ENCODE measurements at regions of chr19 and their contacts with region 1.

Region 1: GRCh38 chr19:46076951-46077816 is 36.4 kb upstream of the IGFL4 start:
- DNase-seq: peak; percentile 90 to 95
- ATAC-seq: peak; percentile 94 to 95
- H3K4me3 ChIP-seq: peak overlapping the region; percentile 59
- H3K27ac ChIP-seq: peak overlapping the region; percentile 72 to 86
- H3K4me1 ChIP-seq: peaks cover 45% of the 10 kb centered on the region
- CTCF ChIP-seq: peak; percentile 100
- EP300 ChIP-seq: no peak
- POLR2A ChIP-seq: no peak
- RAD21 ChIP-seq: peak; percentile 99 to 100

Region 2: GRCh38 chr19:45817010-45817724 is 260.0 kb before region 1 on chr19:
- CTCF ChIA-PET with region 1: interaction called, 13 read pairs
- POLR2A ChIA-PET with region 1: no interaction called
- DNase-seq: peak; percentile 96 to 100
- ATAC-seq: peak; percentile 63 to 93
- H3K4me3 ChIP-seq: no peak overlapping the region
- H3K27ac ChIP-seq: peak overlapping the region in 1 of 2 experiments; percentile 61; a peak in 3 of 6 replicates
- H3K4me1 ChIP-seq: peaks cover 10% of the 10 kb centered on the region; the same call in 1 of the 3 replicates
- CTCF ChIP-seq: peak; percentile 100
- EP300 ChIP-seq: no peak
- POLR2A ChIP-seq: no peak
- RAD21 ChIP-seq: peak; percentile 80 to 85

Region 3: DNA sequence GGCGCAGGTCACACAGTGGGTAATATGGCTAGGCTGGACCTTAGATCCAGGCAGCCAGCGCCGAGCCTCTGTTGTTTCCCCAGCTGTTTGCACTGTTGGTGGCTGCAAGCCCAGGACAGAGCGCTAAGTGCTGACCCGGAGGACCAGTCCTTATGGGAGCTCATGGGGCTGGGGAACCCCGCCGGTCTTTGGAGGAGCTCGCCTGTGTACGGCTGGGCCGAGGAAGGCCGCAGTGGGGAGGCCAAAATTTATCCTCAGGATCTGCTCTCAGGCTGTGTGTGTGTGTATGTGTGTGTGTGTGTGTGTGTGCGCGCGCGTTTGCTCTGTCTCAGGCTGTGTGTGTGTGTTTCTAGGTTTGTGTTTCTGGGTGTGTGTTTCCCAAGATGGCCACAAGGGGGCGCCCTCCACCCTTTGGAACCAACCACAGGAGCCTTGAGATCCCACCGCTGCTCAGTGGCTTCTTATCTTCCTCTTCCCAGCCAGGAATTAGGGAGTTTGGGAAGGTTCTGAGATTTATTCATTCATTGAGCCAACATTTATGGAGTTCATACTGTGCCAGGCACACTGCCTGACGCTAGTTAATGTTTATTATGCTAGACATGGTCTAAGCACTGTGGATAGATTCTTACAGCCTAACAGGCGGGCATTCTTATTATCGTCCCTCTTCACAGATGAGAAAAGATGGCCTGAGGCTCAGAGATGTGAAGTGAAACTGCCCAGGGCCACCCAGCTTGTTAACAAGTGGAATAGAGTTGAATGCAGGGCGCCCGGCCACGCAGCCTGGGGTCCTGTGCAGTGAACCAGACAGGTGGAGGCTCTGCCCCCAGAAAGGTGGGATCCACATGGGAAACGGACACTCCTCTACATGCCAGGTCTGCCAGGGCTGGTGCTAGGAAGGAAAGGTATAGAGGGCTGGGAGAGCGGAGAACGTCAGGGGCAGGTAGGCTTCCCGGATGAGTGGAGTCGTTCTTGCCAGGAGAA is 67.4 kb before region 1 on chr19:
- CTCF ChIA-PET with region 1: interaction called, 1,009 read pairs
- POLR2A ChIA-PET with region 1: interaction called, 4 read pairs
- DNase-seq: peak; percentile 81
- ATAC-seq: peak; percentile 90 to 96
- H3K4me3 ChIP-seq: no peak overlapping the region
- H3K27ac ChIP-seq: no peak overlapping the region
- H3K4me1 ChIP-seq: peaks cover 7% of the 10 kb centered on the region; the same call in 1 of the 3 replicates
- CTCF ChIP-seq: peak; percentile 95
- EP300 ChIP-seq: no peak
- POLR2A ChIP-seq: no peak
- RAD21 ChIP-seq: peak; percentile 61 to 68

Region 4: GRCh38 chr19:46101293-46101692 is 24.1 kb after region 1 on chr19:
- CTCF ChIA-PET with region 1: interaction called, 55 read pairs
- POLR2A ChIA-PET with region 1: no interaction called
- DNase-seq: no peak
- ATAC-seq: no peak
- H3K4me3 ChIP-seq: no peak overlapping the region
- H3K27ac ChIP-seq: no peak overlapping the region
- H3K4me1 ChIP-seq: no peaks in the 10 kb centered on the region
- CTCF ChIP-seq: no peak
- EP300 ChIP-seq: no peak
- POLR2A ChIP-seq: no peak
- RAD21 ChIP-seq: no peak

Region 5: DNA sequence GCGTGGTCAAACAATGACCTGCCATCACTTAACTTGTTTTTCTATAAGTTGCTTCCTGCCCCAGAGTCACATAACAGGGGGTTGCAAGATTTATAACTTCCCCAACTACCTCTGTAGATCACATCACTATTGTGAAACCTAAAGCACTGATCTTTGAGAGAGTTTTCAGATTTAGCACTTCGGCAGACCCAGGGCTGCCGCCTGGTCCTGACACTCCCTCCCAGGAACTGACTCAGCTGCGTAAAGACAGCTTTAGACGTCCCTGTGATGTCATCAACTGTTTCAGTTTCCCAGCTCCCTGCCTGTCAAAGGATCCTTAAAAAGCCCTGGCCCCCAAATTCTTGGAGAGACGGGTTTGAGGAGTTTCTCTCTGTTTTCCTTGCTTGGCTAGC is 104.2 kb after region 1 on chr19:
- CTCF ChIA-PET with region 1: interaction called, 38 read pairs
- POLR2A ChIA-PET with region 1: interaction called, 3 read pairs
- DNase-seq: peak in 1 of 2 experiments; percentile 65
- ATAC-seq: peak; percentile 73 to 80
- H3K4me3 ChIP-seq: no peak overlapping the region
- H3K27ac ChIP-seq: peak overlapping the region; percentile 32 to 70; a peak in 5 of 6 replicates
- H3K4me1 ChIP-seq: peaks cover 34% of the 10 kb centered on the region
- CTCF ChIP-seq: no peak
- EP300 ChIP-seq: no peak
- POLR2A ChIP-seq: no peak
- RAD21 ChIP-seq: no peak

Region 6: GRCh38 chr19:46218160-46218559 is 141.0 kb after region 1 on chr19:
- CTCF ChIA-PET with region 1: interaction called, 33 read pairs
- POLR2A ChIA-PET with region 1: no interaction called
- DNase-seq: peak in 1 of 2 experiments; percentile 56
- ATAC-seq: no peak
- H3K4me3 ChIP-seq: no peak overlapping the region
- H3K27ac ChIP-seq: no peak overlapping the region
- H3K4me1 ChIP-seq: peaks cover 38% of the 10 kb centered on the region
- CTCF ChIP-seq: no peak
- EP300 ChIP-seq: no peak
- POLR2A ChIP-seq: no peak
- RAD21 ChIP-seq: no peak

Region 7: DNA sequence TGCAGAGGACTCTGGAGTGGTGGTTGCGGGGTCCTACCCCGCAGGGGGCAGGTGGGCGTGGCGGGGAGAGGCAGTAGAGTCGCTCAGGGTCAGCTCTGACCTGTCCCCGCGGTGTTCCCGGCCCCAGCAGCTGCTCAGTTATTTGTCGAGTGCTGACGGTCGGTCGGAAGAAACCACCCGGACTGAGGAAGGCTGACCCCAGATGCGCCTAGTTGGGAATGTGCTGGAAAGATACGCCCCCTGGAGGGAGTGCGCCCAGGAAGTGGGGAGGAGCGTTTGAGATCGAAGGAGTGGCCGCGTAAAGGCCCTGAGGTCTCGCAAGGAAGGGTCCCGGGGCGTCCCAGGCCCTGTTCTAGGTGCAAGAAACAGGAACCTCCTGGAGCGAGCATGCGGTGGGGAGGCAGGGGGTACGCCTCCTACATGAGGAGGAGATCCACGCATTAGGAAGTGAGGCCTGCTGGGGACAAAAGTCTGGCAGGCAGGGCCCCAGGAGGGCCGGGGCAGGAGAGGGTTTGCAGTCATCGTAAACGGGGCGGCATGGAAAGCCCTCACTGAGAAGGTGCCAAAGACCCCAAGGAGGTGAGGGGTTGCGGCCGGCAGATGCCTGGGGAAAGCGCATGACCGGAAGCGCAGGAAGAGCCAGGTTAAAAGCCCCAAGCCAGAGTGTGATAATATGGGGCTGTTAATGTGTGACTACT is 327.0 kb after region 1 on chr19:
- CTCF ChIA-PET with region 1: interaction called, 11 read pairs
- POLR2A ChIA-PET with region 1: no interaction called
- DNase-seq: peak; percentile 80 to 93
- ATAC-seq: peak; percentile 89 to 90
- H3K4me3 ChIP-seq: peak overlapping the region; percentile 53
- H3K27ac ChIP-seq: peak overlapping the region; percentile 90 to 92
- H3K4me1 ChIP-seq: no peaks in the 10 kb centered on the region
- CTCF ChIP-seq: peak; percentile 32; the same call in 2 of the 3 replicates
- EP300 ChIP-seq: no peak
- POLR2A ChIP-seq: peak; percentile 78; the same call in 1 of the 2 replicates
- RAD21 ChIP-seq: no peak

Measured in A549 (cell line).